Heart left ventricle (tissue), 16 donors: ENCODE measurements at regions of chrX and their contacts with region 1.

Region 1: GRCh38 chrX:72693477-72693876 is 20.6 kb downstream of the PHKA1 start:
- DNase-seq: peak in 1 of 5 donors; percentile 7
- ATAC-seq: peak in 3 of 4 donors; percentile 42 to 58 (median 50)
- H3K4me3 ChIP-seq: no peak overlapping the region
- H3K27ac ChIP-seq: no peak overlapping the region
- H3K4me1 ChIP-seq: peaks cover 0 to 2% (median 0%) of the 10 kb centered on the region in 12 donors
- H3K27me3 ChIP-seq: peaks cover 0 to 4% (median 0%) of the 10 kb centered on the region in 9 donors
- CTCF ChIP-seq: no peak
- POLR2A ChIP-seq: no peak

Region 2: DNA sequence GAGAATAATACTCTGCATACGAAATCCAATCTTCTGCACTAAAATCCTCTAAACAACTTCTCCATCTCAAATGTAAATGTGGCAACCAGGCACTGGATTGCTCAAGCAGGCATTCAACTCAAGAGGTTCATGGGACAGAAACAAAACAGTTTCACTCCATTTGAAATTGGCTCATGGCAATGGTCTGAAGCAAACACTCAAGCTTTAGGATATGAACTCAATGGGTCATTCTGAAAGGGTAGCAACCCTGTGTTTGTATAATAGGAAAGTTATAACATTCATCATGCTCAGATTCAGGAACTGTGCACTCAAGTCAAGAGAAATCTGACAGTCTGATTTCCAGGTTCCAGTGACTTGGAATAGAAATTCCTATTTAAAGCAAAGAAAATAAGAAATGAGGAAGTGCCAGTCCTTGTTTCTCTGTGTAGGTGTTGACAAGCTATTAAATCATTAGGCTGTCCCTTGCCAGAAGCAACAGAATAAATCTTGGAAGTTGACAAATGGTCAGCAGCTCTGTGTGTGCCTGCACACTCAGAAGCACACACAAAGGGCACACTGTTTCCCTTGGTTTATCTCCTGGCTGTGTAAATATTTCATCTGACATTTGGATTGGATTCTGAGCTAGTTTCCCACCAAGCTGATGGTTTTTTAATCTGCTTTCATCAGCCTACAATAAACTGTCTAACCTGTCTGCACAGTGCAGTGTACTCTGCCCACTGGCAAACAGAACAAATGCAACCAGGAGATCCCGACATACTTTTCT is 311.9 kb before region 1 on chrX:
- intact Hi-C with region 1: no loop called
- DNase-seq: no peak
- ATAC-seq: peak; percentile 67 to 75 (median 70)
- H3K4me3 ChIP-seq: no peak overlapping the region
- H3K27ac ChIP-seq: no peak overlapping the region
- H3K4me1 ChIP-seq: peaks cover 0 to 12% (median 2%) of the 10 kb centered on the region in 12 donors
- H3K27me3 ChIP-seq: peaks cover 0 to 10% (median 0%) of the 10 kb centered on the region in 9 donors
- CTCF ChIP-seq: no peak
- POLR2A ChIP-seq: no peak

Region 3: DNA sequence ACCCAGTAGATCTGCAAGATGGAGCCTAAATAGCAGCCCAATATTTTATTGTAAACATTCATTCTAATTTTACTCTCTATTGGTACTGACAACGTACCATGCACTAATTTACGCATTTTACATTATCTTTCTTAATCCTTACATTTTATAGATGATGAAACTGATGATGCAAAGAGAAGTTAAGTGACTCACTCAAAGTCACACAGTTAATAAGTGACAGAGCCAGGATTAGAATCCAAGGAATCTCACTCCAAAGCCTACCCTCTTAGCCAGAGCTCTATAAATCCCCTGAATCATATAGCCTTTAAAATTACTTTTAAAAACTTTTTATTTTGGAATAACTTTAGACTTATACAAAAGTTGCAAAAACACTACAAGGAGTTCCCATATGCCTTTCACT is 17.0 kb before region 1 on chrX:
- intact Hi-C with region 1: loop called in 1 of 10 experiments (anchors 2 kb)
- DNase-seq: no peak
- ATAC-seq: no peak
- H3K4me3 ChIP-seq: no peak overlapping the region
- H3K27ac ChIP-seq: no peak overlapping the region
- H3K4me1 ChIP-seq: no peaks in the 10 kb centered on the region
- H3K27me3 ChIP-seq: peaks cover 0 to 6% (median 0%) of the 10 kb centered on the region in 9 donors
- CTCF ChIP-seq: no peak
- POLR2A ChIP-seq: no peak